ENCODE measurements at regions of chr2 and their contacts with region 1.

Region 1: DNA sequence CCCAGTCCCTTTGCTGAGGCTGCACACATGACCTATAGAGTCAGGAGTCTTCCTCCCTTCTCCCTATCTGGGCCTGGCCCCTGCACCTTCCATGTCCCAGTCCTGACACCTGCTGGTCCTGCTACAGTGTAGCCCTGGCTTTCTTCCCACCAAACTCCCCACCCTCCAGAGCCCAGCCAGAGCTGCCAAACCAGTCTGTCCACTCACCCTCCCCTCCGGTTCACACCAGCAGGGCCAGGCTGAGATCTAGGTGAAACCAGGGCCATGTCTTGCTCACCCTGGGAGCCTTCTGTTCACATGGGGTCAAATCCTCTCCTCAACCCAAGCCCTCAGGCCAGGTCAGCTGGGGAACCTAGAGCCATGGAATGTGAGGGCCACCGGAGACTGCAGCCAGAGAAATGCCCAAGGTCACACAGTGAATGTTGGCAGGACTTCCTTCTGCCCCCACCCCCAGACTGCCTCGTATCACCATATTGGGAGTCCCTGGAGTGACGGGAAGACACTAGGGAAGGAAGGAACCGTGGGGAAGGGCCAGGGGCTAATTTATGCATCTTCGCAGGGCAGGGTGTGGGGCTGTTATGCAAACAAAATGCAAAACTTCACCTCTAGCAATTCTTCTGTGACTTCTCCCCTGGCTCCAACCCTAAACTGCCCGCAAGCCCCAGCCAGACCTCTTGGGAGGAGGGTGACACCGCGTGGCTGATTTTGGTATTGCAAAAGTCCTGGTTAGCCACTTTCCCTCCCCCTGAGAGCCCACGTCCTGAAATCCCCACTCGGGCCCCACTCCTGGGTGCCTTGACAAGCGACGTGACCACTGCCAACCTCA is 14.6 kb downstream of the TNS1 start:
- DNase-seq: peak; percentile 78
- H3K4me3 Mint-ChIP-seq: no peak overlapping the region
- H3K27ac Mint-ChIP-seq: no peak overlapping the region
- H3K4me1 Mint-ChIP-seq: peaks cover 3% of the 10 kb centered on the region
- H3K27me3 Mint-ChIP-seq: peaks cover 5% of the 10 kb centered on the region

Region 2: GRCh38 chr2:217858519-217859491 is 129.4 kb before region 1 on chr2:
- CTCF ChIA-PET with region 1: no interaction called
- POLR2A ChIA-PET with region 1: no interaction called
- intact Hi-C with region 1: no loop called
- DNase-seq: no peak
- H3K4me3 Mint-ChIP-seq: no peak overlapping the region
- H3K27ac Mint-ChIP-seq: no peak overlapping the region
- H3K4me1 Mint-ChIP-seq: no peaks in the 10 kb centered on the region
- H3K27me3 Mint-ChIP-seq: no peaks in the 10 kb centered on the region

Region 3: GRCh38 chr2:217899231-217900009 is 88.8 kb before region 1 on chr2:
- CTCF ChIA-PET with region 1: no interaction called
- POLR2A ChIA-PET with region 1: no interaction called
- intact Hi-C with region 1: loop called (anchors 10 kb)
- DNase-seq: peak; percentile 32
- H3K4me3 Mint-ChIP-seq: no peak overlapping the region
- H3K27ac Mint-ChIP-seq: no peak overlapping the region
- H3K4me1 Mint-ChIP-seq: no peaks in the 10 kb centered on the region
- H3K27me3 Mint-ChIP-seq: peaks cover 4% of the 10 kb centered on the region

Region 4: DNA sequence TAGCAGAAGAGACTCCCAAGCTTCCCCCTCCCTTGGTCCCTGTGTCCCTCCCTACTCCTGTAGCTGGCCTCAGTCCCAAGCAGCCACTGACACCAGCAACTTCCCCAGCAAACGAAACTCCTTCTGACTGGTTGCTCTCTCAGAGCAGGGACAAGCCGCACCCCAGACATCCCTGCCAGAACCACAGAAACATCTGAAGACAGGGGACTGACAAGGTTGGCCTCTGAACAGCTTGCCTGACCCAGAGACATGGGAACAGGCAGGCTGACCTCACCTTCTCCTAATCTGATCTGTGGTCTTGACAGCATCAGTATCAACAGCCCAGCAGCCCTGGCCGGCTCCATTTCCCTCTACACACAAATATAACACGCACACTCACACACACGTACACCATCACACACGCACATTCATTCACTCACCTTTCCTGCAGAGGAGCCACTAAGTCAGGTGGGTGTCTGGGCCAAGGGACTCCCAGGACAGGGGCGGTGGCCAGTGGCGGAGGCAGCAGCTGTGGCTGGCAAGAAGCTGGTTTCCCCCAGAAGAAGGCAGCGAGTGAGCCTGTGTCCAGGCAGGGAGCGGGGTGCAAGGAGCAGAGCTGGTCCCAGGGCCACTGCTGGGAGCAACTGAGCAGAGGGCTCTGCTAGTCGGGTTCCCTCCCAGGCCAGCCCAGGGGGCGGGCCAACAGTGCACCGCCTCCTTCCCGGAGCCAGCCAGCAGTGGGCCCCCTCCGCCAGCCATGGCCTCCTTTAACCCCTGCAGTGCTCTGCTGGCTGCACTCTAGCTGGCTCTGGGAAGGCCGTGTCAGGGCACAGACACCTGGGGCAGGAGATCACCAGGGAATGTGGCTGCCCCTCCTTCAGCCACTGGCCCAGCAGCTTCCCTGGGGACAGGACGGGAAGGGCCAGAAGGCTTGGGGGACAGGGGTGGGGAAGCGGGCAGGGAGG is 44.5 kb before region 1 on chr2:
- CTCF ChIA-PET with region 1: no interaction called
- POLR2A ChIA-PET with region 1: no interaction called
- intact Hi-C with region 1: loop called (anchors 2 kb)
- DNase-seq: peak; percentile 13
- H3K4me3 Mint-ChIP-seq: no peak overlapping the region
- H3K27ac Mint-ChIP-seq: no peak overlapping the region
- H3K4me1 Mint-ChIP-seq: no peaks in the 10 kb centered on the region
- H3K27me3 Mint-ChIP-seq: peaks cover 29% of the 10 kb centered on the region

Measured in activated CD4-positive, alpha-beta memory T cell treated with anti-CD3 and anti-CD28 coated beads for 36 hours (primary cell).